Heart right ventricle (tissue), 16 donors: ENCODE measurements at regions of chr17 and their contacts with region 1.

Region 1: GRCh38 chr17:21019976-21020586 is 22.7 kb downstream of the USP22 start:
- DNase-seq: no peak
- ATAC-seq: peak; percentile 51 to 70 (median 66)
- H3K4me3 ChIP-seq: no peak overlapping the region
- H3K27ac ChIP-seq: no peak overlapping the region
- H3K4me1 ChIP-seq: peaks cover 10 to 58% (median 28%) of the 10 kb centered on the region in 9 donors
- H3K27me3 ChIP-seq: no peaks in the 10 kb centered on the region
- CTCF ChIP-seq: peak in 7 of 9 donors; percentile 13 to 53 (median 43)

Region 2: GRCh38 chr17:21061971-21062526 is 42.0 kb after region 1 on chr17:
- intact Hi-C with region 1: no loop called
- DNase-seq: no peak
- ATAC-seq: no peak
- H3K4me3 ChIP-seq: no peak overlapping the region
- H3K27ac ChIP-seq: no peak overlapping the region
- H3K4me1 ChIP-seq: no peaks in the 10 kb centered on the region
- H3K27me3 ChIP-seq: no peaks in the 10 kb centered on the region
- CTCF ChIP-seq: no peak

Region 3: DNA sequence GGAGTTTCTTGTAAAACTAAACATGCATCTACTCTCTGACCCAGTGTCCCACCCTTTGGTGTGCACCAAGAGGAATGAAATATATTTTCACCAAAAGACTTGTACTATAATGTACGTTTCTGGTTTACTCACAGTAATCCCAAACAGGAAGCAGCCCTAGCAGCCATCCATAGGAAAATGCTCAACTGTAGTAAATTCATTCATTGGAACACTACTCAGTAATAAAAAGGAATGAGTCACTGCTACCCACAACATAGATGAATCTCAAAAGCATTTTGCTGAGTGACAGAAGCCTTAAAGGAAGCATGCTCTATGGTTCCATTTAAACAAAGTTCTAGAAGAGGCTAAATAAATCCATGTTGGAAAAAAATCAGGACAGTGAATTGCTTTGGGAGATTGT is 69.1 kb after region 1 on chr17:
- intact Hi-C with region 1: loop called in 1 of 10 experiments (anchors 10 kb)
- DNase-seq: no peak
- ATAC-seq: no peak
- H3K4me3 ChIP-seq: no peak overlapping the region
- H3K27ac ChIP-seq: no peak overlapping the region
- H3K4me1 ChIP-seq: no peaks in the 10 kb centered on the region
- H3K27me3 ChIP-seq: peaks cover 0 to 4% (median 0%) of the 10 kb centered on the region in 7 donors
- CTCF ChIP-seq: no peak

Region 4: GRCh38 chr17:21129023-21129681 is 109.1 kb after region 1 on chr17:
- intact Hi-C with region 1: no loop called
- DNase-seq: peak in 1 of 2 donors; percentile 36
- ATAC-seq: peak in 2 of 8 donors; percentile 25 to 27
- H3K4me3 ChIP-seq: no peak overlapping the region
- H3K27ac ChIP-seq: no peak overlapping the region
- H3K4me1 ChIP-seq: peaks cover 4 to 66% (median 39%) of the 10 kb centered on the region in 9 donors
- H3K27me3 ChIP-seq: no peaks in the 10 kb centered on the region
- CTCF ChIP-seq: peak; percentile 32 to 80 (median 57)